Left ventricle myocardium inferior (tissue), 1 donor: ENCODE measurements at regions of chrX and their contacts with region 1.

Region 1: DNA sequence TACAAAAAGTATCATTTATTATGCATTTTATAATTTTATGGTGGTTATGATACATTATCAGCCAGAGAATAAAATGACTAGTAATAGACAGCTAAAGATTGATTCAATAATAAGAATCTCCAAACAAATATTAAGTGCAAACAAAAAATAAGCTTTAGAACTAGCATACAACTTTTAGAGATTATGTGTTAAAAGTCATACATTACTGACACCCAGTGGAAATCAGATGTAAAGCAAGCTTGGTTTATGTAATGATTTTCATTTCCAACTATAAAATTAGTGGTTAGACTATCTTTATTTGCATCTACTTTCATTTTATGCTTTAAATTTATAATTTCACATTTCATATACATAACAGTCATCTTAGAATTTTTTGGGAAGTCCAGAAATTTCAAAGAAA is 57.7 kb downstream of the IL13RA2 start:
- DNase-seq: no peak
- H3K4me3 ChIP-seq: no peak overlapping the region
- H3K27ac ChIP-seq: no peak overlapping the region
- H3K4me1 ChIP-seq: no peaks in the 10 kb centered on the region
- H3K27me3 ChIP-seq: no peaks in the 10 kb centered on the region
- CTCF ChIP-seq: peak; percentile 61

Region 2: GRCh38 chrX:114619874-114620273 is 339.9 kb before region 1 on chrX:
- intact Hi-C with region 1: loop called (anchors 10 kb)
- DNase-seq: no peak
- H3K4me3 ChIP-seq: no peak overlapping the region
- H3K27ac ChIP-seq: no peak overlapping the region
- H3K4me1 ChIP-seq: no peaks in the 10 kb centered on the region
- H3K27me3 ChIP-seq: no peaks in the 10 kb centered on the region
- CTCF ChIP-seq: peak; percentile 44